Head of caudate nucleus (tissue), 42 donors: ENCODE measurements at regions of chr2 and their contacts with region 1.

Region 1: DNA sequence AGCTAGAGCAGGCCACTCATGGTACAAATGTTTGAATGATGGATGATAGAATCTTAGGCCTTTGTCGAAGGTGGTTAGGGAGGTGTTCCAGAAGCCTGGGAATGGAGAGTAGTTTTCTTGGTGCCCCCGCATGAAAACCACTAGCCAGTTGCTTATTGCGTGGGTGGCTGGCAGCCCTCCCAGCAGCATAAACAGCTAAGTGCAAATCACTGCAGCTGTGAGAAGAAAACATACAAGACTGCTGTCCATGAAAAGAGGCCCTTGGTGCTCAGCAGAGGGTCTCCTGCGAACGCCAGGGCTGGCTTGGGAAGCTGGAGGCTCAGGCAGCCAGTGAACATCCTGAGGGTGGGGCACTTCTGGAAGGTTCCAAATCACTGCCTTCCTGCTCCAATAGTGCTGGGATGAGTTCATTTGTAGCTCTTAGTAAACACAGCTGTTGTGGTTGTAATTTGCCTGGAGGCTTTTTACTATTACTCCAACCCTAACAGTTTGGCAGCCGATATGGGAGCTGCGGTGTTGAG is 118.8 kb downstream of the MGAT5 start:
- DNase-seq: peak in 24 of 42 donors; percentile 9 to 59 (median 35)

Region 2: GRCh38 chr2:134405611-134406081 is 33.0 kb after region 1 on chr2:
- intact Hi-C with region 1: loop called (anchors 5 kb)
- DNase-seq: no peak

Region 3: GRCh38 chr2:134512734-134513464 is 140.2 kb after region 1 on chr2:
- intact Hi-C with region 1: no loop called
- DNase-seq: no peak